Mammary epithelial cell (primary cell): ENCODE measurements at regions of chr6 and their contacts with region 1.

Region 1: GRCh38 chr6:108820006-108820405 is 28.2 kb upstream of the ARMC2 start:
- DNase-seq: no peak
- H3K4me3 ChIP-seq: no peak overlapping the region
- H3K27ac ChIP-seq: no peak overlapping the region
- H3K4me1 ChIP-seq: no peaks in the 10 kb centered on the region
- H3K27me3 ChIP-seq: no peaks in the 10 kb centered on the region
- CTCF ChIP-seq: no peak

Region 2: DNA sequence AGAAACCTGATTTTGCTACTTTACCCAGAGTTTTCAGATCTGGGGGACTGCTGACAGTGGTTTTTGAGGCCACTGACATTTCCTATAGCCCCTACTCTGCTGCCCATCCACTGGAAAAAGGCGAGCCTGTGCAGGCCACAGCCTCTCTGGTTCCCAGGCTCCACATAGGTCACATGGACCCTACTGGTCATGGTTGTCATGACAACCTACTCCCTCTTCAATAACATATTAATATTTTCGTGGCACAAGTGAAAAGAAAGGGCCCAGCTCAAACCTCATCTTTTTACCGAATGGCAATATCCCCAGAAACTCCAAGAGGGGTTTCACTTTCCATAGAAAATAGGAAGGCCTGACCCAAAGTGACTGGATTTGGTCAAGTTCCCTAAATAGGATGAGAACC is 270.3 kb before region 1 on chr6:
- CTCF ChIA-PET with region 1: no interaction called
- dilution Hi-C with region 1: loop called (anchors 5 kb)
- in situ Hi-C with region 1: no loop called
- intact Hi-C with region 1: no loop called
- DNase-seq: no peak
- H3K4me3 ChIP-seq: no peak overlapping the region
- H3K27ac ChIP-seq: no peak overlapping the region
- H3K4me1 ChIP-seq: peaks cover 3% of the 10 kb centered on the region
- H3K27me3 ChIP-seq: no peaks in the 10 kb centered on the region
- CTCF ChIP-seq: no peak

Region 3: DNA sequence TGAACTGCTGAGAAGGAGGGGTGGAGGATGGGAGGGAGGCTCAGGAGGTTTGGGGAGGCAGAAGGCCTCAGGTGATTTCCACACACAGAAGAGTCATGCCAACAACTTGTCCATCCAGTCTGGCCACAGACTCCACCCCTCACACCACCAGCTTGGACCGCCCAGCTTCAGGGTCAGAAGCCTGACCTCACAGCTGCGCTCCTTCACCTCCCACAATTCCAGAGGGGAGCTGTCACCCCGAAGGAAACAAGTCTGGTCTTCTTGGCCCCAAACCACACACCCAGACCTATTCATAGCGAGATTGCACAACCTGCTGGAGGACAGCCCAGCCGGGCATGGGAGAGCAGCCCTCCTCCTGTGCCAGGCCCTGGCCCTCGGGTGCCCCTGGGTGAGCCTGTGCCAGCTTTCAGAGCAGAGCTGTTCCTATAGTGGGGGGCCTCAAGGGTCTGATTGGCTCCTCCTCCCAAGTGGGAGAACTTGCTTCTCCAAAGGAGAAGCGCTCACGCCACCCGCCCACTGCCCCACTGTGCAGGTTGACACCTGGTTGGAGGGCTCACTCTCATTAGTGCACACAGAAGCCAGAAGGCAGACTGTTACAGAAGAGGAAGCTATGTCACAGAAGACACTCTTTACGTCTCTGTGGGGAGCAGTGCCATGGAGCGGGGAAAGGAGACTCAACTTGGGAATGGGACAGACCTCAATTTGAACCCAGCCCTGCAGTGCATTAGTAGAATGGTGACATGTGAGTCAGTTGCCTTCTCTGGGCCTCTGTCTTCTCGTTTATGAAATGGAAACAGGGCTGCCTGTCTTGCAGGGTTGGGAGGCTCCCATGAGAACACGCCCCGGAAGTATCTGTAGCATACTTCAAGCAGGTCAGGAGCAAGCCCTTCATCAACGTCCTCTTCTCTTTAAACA is 130.5 kb before region 1 on chr6:
- CTCF ChIA-PET with region 1: no interaction called
- dilution Hi-C with region 1: no loop called
- in situ Hi-C with region 1: no loop called
- intact Hi-C with region 1: no loop called
- DNase-seq: peak; percentile 100
- H3K4me3 ChIP-seq: no peak overlapping the region
- H3K27ac ChIP-seq: peak overlapping the region; percentile 79
- H3K4me1 ChIP-seq: peaks cover 57% of the 10 kb centered on the region
- H3K27me3 ChIP-seq: no peaks in the 10 kb centered on the region
- CTCF ChIP-seq: peak in 1 of 2 donors; percentile 1

Region 4: GRCh38 chr6:108755257-108756240 is 64.5 kb before region 1 on chr6:
- CTCF ChIA-PET with region 1: no interaction called
- dilution Hi-C with region 1: no loop called
- in situ Hi-C with region 1: no loop called
- intact Hi-C with region 1: no loop called
- DNase-seq: peak; percentile 24
- H3K4me3 ChIP-seq: no peak overlapping the region
- H3K27ac ChIP-seq: no peak overlapping the region
- H3K4me1 ChIP-seq: no peaks in the 10 kb centered on the region
- H3K27me3 ChIP-seq: no peaks in the 10 kb centered on the region
- CTCF ChIP-seq: no peak